Dorsolateral prefrontal cortex (tissue), 120 donors: ENCODE measurements at regions of chr12 and their contacts with region 1.

Region 1: DNA sequence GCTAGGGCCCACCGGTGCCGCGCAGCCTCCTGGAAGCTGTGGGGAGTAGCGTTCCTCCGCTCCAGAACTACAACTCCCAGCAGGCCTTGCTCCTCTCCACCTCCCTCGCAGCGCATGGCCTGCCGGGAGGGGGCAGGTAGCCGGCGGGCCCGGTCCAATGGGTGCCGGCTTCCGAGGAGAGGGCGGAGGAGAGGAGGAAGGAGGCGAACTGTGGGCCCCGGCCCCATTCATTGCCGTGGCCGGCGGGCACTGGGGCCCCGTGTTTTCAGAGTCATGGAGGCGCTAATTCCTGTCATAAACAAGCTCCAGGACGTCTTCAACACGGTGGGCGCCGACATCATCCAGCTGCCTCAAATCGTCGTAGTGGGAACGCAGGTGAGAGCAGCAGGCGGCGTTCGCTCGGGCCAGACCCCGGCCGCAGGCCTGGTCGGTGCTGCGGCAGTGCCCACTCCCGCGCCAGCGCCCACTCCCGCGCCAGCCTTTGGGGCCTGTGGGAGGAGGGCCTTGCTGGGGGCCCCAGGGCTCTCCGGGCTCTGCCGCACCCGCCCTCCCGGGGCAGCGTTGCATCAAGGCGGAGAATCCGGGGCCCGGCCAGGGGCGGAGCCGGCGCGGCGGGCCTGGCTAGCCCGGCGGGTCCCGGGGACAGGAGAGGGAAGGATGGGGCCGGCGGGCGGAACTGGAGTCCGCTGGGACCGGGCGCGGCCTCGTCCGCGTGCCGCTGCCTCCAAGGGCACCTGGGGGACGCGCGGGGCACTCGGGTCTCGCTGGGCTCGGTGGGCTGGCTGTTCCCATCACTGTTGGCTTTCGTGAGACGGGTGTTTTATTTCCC is at the start of gene DNM1L:
- DNase-seq: peak; percentile 86 to 98 (median 94)
- H3K4me3 ChIP-seq: peak within 1 kb of the TSS; percentile 67 to 98 (median 88)
- H3K27ac ChIP-seq: peak within 1 kb of the TSS; percentile 65 to 99 (median 94)
- H3K27me3 ChIP-seq: no peaks in the 10 kb centered on the region
- CTCF ChIP-seq: peak in 46 of 56 donors; percentile 12 to 60 (median 44)
- total RNA-seq, gene DNM1L: 72.9 to 202 (median 157) TPM

Region 2: GRCh38 chr12:31659087-31659933 is 1020.0 kb before region 1 on chr12 and contains the start of gene ETFBKMT:
- intact Hi-C with region 1: loop called (anchors 5 kb)
- DNase-seq: peak; percentile 68 to 94 (median 90)
- H3K4me3 ChIP-seq: peak within 1 kb of the TSS; percentile 59 to 97 (median 81)
- H3K27ac ChIP-seq: peak within 1 kb of the TSS; percentile 84 to 99 (median 96)
- H3K27me3 ChIP-seq: no peaks in the 10 kb centered on the region
- CTCF ChIP-seq: peak; percentile 29 to 89 (median 72)
- total RNA-seq, gene ETFBKMT: 1.6 to 8.4 (median 4.6) TPM

Region 3: GRCh38 chr12:31959161-31959700 is 720.1 kb before region 1 on chr12 and contains the start of gene RESF1:
- intact Hi-C with region 1: loop called in 1 of 2 experiments (anchors 5 kb)
- DNase-seq: peak; percentile 71 to 90 (median 85)
- H3K4me3 ChIP-seq: peak within 1 kb of the TSS; percentile 50 to 88 (median 73)
- H3K27ac ChIP-seq: peak within 1 kb of the TSS; percentile 41 to 95 (median 88)
- H3K27me3 ChIP-seq: no peaks in the 10 kb centered on the region
- CTCF ChIP-seq: peak in 18 of 56 donors; percentile 6 to 47 (median 22)
- total RNA-seq, gene RESF1: 21.6 to 58.1 (median 36.9) TPM

Region 4: DNA sequence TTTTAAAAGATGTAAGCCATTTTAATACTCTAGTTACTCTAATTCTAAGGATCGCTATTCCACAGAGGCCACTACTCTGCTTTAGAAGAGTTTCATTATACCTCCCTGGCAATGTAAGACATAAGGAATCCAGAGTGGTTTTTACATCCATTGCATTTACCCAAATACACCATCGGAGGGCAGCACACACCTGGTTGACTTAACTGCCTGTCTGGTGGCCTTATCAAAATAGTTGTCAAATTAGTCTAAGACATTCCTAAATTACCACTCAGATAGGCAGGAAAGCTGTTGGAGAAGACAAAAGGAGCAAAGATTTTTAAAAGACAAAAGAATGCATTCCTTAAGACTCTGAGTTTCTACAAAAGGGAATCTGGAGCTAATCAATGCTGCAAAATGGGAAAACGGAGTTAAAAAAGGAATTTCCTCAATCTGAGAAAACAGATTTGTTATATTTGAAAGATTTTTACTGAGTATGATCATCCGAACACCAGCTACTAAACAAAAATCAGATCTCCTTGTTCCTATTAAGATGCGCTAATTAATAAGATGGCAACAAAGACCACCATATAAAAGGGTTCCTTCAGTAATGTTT is 313.7 kb before region 1 on chr12:
- intact Hi-C with region 1: loop called (anchors 5 to 10 kb)
- DNase-seq: peak in 5 of 10 donors; percentile 26 to 63 (median 45)
- H3K4me3 ChIP-seq: no peak overlapping the region
- H3K27ac ChIP-seq: no peak overlapping the region
- H3K27me3 ChIP-seq: no peaks in the 10 kb centered on the region
- CTCF ChIP-seq: peak; percentile 59 to 89 (median 78)

Region 5: GRCh38 chr12:32755654-32756475 is 76.6 kb after region 1 on chr12 and contains the start of gene YARS2:
- intact Hi-C with region 1: loop called in 1 of 2 experiments (anchors 5 kb)
- DNase-seq: peak; percentile 90 to 96 (median 96)
- H3K4me3 ChIP-seq: peak within 1 kb of the TSS; percentile 67 to 100 (median 91)
- H3K27ac ChIP-seq: peak within 1 kb of the TSS; percentile 84 to 100 (median 97)
- H3K27me3 ChIP-seq: no peaks in the 10 kb centered on the region
- CTCF ChIP-seq: peak; percentile 58 to 93 (median 82)
- total RNA-seq, gene YARS2: 8.7 to 27.0 (median 15.9) TPM